Right ventricle myocardium superior (tissue), 1 donor: ENCODE measurements at regions of chr2 and their contacts with region 1.

Region 1: GRCh38 chr2:64562148-64562784 is 38.1 kb downstream of the AFTPH start:
- DNase-seq: no peak
- ATAC-seq: peak; percentile 62

Region 2: GRCh38 chr2:64404002-64404731 is 158.1 kb before region 1 on chr2:
- intact Hi-C with region 1: no loop called
- DNase-seq: peak; percentile 92
- ATAC-seq: peak; percentile 87

Region 3: GRCh38 chr2:64439194-64439593 is 123.1 kb before region 1 on chr2:
- intact Hi-C with region 1: no loop called
- DNase-seq: no peak
- ATAC-seq: no peak

Region 4: GRCh38 chr2:64523666-64524603 is 38.3 kb before region 1 on chr2 and contains the start of gene AFTPH:
- intact Hi-C with region 1: loop called (anchors 5 kb)
- DNase-seq: peak; percentile 99
- ATAC-seq: peak; percentile 99
- total RNA-seq, gene AFTPH: 12.3 TPM